ENCODE measurements at regions of chr10 and their contacts with region 1.

Region 1: DNA sequence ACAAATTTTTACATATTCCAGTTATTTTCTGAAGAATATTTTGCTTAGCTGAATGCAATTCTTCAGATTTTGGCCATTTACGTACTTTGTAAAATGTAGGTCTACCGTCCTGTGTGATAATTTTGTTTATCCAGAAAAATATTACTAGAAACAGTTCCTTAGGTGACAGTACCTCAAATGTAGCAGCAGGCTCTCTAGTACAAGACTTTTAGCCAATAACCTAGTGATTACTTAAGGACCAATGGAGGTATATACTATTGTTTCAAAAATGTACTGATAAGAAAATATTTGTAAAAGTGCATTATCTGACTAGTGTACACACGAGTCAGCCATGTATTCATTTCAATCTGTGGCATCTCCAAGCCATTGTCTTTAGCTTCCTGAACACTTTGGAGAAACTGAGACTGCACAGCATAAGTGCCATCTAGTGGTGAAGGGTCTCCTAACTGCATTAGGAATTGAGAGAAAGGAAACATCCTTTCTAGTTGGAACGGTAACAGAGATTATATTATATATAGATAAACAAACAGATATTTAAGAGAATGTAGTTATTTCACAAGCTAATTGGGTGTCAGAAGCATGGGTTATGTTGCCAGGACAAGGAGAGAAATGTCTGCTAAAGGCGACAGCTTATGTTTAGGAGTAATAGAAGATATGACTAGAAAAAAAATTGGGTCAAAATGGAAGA is 23.7 kb downstream of the RTKN2 start:
- DNase-seq: no peak
- H3K4me3 ChIP-seq: no peak overlapping the region
- CTCF ChIP-seq: peak; percentile 78

Region 2: GRCh38 chr10:61750929-61751471 is 493.9 kb before region 1 on chr10:
- CTCF ChIA-PET with region 1: interaction called, 11 read pairs
- POLR2A ChIA-PET with region 1: no interaction called
- DNase-seq: no peak
- H3K4me3 ChIP-seq: no peak overlapping the region
- CTCF ChIP-seq: peak; percentile 78

Region 3: DNA sequence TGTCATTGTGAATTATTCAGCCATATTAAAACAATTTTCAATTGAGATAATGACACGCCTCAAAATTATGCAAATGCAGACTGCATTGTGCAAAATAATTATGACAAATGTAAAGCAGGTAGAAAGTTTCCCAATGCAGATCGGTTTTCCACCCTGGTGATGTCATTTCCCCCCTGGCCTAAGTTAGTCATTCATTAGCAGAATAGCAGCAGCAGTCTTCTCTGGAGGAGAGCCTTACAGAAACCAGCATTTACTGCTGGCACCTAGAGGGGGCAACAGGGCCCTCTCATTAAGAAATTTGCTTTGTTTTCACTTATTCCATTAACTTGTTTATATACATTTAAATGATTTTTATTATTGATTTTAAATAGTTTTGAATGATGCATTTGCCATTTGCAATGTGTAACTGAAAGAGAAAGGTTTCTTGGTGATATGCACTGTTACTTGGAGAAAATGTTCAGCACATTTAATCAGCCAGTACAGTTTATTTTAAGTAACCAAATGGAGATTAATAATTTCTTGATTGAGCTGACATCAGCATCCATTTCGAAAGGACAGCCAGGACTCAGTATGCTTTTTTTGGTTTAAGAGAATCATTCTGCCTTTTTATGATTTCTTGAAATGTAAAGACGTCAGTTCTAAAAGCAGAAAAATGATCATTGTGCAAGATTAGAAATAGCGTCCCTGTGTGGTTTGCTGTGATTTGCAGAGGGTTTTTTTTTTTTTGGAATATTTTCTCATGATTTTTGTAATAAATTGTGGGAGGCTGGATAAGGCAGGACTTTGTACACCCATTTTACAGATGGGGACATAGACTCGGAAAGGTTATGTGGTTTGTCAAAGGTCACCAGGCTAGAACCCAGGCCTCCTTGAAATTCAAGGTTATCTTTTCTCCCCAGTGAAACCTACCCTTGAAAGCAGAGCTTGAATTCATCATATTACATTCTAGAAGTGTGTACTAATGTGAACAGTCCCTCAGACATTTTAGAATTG is 339.9 kb before region 1 on chr10:
- CTCF ChIA-PET with region 1: interaction called, 11 read pairs
- POLR2A ChIA-PET with region 1: no interaction called
- DNase-seq: no peak
- H3K4me3 ChIP-seq: peak overlapping the region; percentile 81
- CTCF ChIP-seq: peak; percentile 15

Region 4: DNA sequence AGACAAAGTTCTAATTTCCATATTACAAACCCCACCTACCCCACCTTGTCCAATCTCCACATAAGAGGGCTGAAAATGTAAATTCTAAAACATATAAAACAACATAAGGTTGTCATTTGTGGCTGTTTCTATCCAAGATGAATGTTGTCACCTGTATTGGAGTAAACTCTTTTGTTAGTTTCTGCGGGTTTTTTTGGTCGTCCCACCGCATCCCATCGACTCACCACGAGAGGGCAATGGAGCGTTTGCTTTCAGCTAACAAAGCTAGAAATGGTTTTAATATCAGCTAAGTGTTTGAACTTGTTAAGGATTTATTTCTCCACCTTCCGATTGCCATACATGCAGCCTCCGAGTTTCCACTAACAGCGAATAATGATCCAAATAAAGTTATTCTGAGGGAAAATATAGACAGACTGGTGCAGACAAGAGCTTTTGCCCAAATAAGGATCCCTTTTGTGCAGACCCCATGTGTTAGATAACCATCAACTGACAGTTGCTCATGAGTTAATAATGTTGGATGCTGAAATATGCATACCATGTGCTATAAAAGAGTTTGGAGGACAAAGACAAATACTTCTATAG is 206.2 kb before region 1 on chr10:
- CTCF ChIA-PET with region 1: interaction called, 215 read pairs
- POLR2A ChIA-PET with region 1: interaction called, 5 read pairs
- DNase-seq: no peak
- H3K4me3 ChIP-seq: peak overlapping the region; percentile 10; the same call in 1 of the 2 replicates
- CTCF ChIP-seq: peak; percentile 78

Region 5: DNA sequence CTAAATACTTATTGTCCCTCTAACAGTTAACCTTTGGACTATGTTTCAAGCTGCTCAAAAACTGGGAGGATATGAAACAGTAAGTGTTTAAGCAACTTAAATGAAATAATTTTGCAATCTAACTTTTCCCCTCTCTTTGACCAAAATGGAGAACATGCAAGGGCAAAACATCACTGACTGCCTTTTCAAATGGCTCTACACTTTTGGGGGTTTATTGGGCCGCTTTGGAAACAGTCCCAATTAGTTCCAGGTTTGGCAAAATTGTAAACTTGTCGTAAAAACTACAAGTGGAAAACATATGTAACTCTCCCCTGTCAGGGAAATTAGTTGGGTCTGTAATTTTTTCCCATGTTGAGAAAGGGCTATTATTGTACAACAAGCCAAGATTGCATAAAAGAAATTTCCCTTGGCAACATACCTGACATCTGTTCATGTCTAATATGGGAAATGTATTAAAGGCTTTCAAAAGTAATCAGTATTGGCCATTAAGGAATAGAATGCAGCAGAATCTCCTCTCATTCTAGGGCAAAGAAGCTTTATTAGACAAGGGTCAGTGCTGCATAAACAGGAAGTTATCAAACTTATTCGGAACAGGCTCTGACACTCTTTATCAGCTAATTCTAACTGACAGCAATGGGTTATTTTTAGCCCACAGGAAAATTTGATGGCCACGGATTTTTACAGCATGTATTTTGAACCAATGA is 185.6 kb before region 1 on chr10:
- CTCF ChIA-PET with region 1: interaction called, 13 read pairs
- POLR2A ChIA-PET with region 1: interaction called, 4 read pairs
- DNase-seq: no peak
- H3K4me3 ChIP-seq: no peak overlapping the region
- CTCF ChIP-seq: no peak

Region 6: DNA sequence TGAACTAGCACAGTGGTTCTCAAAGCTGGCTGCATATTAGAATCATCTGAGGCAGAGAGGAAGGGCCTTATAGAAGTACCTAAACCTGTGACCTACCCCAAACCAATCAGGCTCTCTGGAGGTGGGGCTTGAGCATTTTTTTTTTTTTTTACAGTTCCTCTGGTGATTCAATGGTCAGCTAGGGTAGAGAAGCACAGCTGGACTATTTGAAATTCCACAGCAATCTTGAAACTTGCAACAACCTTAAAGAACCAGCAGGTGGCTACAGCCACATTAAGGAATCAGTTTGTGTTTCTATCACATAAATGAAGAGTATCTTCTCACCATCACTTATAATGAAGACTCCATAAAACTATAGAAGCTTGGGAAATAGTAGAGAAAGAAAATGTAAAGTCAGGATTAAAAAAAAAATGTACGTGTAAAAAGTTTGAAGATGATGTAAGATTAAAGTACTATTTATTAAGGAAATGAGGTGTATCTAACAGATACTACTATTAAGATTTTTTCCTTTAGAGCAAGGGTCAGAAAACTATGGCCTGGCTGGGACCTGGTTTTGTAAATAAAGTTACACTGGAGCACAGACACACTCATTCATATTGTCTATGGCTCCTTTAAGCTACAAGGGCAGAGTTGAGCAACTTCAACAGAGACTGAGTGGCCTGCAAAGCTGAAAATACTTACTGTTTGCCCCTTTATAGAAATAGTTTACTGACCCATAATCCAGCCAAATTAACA is 19.9 kb after region 1 on chr10:
- CTCF ChIA-PET with region 1: interaction called, 80 read pairs
- POLR2A ChIA-PET with region 1: no interaction called
- DNase-seq: peak; percentile 69
- H3K4me3 ChIP-seq: no peak overlapping the region
- CTCF ChIP-seq: peak; percentile 55